HEK293 (cell line): ENCODE measurements at regions of chr21 and their contacts with region 1.

Region 1: GRCh38 chr21:31580866-31581276 is 78.6 kb upstream of the SOD1 start:
- H3K4me3 ChIP-seq: no peak overlapping the region
- H3K27ac ChIP-seq: no peak overlapping the region
- H3K4me1 ChIP-seq: no peaks in the 10 kb centered on the region
- CTCF ChIP-seq: peak; percentile 57; the same call in 1 of the 2 replicates

Region 2: GRCh38 chr21:31198575-31198974 is 382.3 kb before region 1 on chr21:
- CTCF ChIA-PET with region 1: interaction called, 161 read pairs
- POLR2A ChIA-PET with region 1: no interaction called
- H3K4me3 ChIP-seq: no peak overlapping the region
- H3K27ac ChIP-seq: no peak overlapping the region
- H3K4me1 ChIP-seq: peaks cover 11% of the 10 kb centered on the region; the same call in 1 of the 2 replicates
- CTCF ChIP-seq: no peak

Region 3: GRCh38 chr21:31403596-31404333 is 177.1 kb before region 1 on chr21:
- CTCF ChIA-PET with region 1: interaction called, 10 read pairs
- POLR2A ChIA-PET with region 1: no interaction called
- H3K4me3 ChIP-seq: no peak overlapping the region
- H3K27ac ChIP-seq: peak overlapping the region; percentile 2; the same call in 1 of the 2 replicates
- H3K4me1 ChIP-seq: peaks cover 27% of the 10 kb centered on the region
- CTCF ChIP-seq: no peak

Region 4: DNA sequence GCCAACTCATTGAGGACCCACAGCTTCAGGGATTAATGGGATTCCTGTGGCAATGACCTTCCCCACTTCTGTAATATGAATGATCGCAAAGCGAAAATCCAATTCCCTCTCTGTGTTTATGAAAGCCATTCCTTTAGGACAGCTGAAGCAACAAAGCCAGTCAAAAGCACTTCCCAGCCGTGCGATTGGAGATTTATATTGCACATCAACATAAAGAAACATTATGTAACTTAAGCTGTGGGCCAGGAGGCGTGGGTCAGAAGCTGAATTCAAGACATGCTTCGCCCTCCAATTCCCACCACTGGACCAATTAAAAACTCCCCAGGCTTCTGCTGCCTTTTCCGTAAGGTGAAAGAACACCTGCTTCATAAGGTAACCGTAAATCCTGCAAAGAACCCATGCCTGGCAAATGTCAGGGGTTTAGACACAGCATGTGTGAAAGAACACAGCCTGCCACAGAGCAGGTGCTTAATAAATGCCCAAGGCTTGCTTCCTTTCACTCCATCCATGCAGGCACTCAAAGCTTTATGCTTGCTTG is 60.2 kb before region 1 on chr21:
- CTCF ChIA-PET with region 1: interaction called, 13 read pairs
- POLR2A ChIA-PET with region 1: no interaction called
- H3K4me3 ChIP-seq: no peak overlapping the region
- H3K27ac ChIP-seq: peak overlapping the region; percentile 29; the same call in 1 of the 2 replicates
- H3K4me1 ChIP-seq: peaks cover 21% of the 10 kb centered on the region
- CTCF ChIP-seq: no peak

Region 5: DNA sequence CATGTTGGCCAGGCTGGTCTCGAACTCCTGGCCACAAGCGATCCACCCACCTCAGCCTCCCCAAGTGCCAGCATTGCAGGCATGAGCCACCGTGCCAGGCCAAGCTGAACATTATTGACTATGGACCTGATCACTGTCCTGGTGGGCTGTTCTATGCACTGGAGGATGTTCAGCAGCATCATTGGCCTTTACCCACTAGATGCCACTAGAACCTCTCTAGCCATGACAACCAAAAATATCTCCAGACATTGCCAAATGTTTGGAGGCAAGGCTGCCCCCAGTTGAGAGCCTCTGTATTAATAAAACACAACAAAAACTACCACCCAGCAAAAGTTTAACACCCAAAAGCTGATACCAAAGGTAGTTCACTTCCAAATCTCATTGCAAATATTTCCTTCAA is 32.2 kb before region 1 on chr21:
- CTCF ChIA-PET with region 1: interaction called, 12 read pairs
- POLR2A ChIA-PET with region 1: no interaction called
- H3K4me3 ChIP-seq: no peak overlapping the region
- H3K27ac ChIP-seq: no peak overlapping the region
- H3K4me1 ChIP-seq: peaks cover 16% of the 10 kb centered on the region
- CTCF ChIP-seq: peak; percentile 80

Region 6: DNA sequence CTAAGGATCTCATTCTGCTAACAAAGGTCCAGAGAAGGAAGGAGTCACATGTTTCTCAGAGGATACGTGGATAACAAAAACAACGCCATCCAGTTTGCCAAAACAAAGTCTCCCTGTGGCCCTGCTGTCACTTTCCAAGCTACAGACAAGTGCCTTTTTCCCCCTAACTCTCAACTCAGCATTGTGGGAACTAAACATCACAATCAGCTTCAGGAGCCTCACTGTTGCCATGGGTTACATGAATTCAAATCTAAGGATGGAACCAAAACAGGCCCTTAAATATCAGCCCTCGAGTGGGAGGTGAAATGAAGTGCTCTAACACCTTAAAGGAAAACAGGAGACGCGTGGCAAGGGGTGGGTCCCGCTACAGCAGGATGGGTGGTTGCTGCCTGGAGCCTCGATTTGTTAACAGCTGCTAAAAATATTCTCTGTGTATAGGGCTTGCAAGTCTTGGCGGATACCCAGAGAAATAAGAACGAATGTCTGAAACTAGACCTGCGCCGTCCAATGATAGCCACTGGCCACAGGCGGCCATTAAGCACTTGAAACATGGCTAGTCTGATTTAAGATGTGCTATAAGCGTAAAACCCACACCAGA is 12.2 kb after region 1 on chr21:
- CTCF ChIA-PET with region 1: interaction called, 26 read pairs
- POLR2A ChIA-PET with region 1: no interaction called
- H3K4me3 ChIP-seq: no peak overlapping the region
- H3K27ac ChIP-seq: no peak overlapping the region
- H3K4me1 ChIP-seq: no peaks in the 10 kb centered on the region
- CTCF ChIP-seq: no peak

Region 7: GRCh38 chr21:31629972-31630711 is 49.3 kb after region 1 on chr21:
- CTCF ChIA-PET with region 1: no interaction called
- POLR2A ChIA-PET with region 1: no interaction called
- H3K4me3 ChIP-seq: no peak overlapping the region
- H3K27ac ChIP-seq: no peak overlapping the region
- H3K4me1 ChIP-seq: 0 out of 2 replicates have a peak, but pooled peaks cover 4% of the 10 kb centered on the region
- CTCF ChIP-seq: no peak

Region 8: GRCh38 chr21:31786164-31786920 is 205.5 kb after region 1 on chr21:
- CTCF ChIA-PET with region 1: no interaction called
- POLR2A ChIA-PET with region 1: no interaction called
- H3K4me3 ChIP-seq: no peak overlapping the region
- H3K27ac ChIP-seq: no peak overlapping the region
- H3K4me1 ChIP-seq: peaks cover 7% of the 10 kb centered on the region
- CTCF ChIP-seq: no peak